ENCODE measurements at regions of chr10 and their contacts with region 1.

Region 1: DNA sequence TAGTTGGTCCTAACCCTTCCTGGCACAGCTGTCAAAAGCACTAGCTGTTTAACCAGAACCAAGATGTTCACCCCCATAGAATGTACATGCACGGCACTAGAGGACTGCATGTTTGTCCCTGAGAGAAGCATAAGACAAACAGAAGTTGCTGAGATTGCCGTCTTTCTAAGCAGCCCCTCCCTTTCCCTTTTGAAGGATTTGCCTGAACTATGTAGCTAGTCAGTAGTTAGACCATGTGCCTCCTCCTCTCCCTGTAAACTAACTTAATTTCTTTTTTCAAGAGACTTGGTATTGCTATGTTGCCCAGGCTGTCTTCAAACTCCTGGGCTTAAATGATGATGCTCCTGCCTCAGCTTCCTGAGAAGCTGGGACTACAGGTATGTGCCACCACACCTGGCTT is 40.7 kb downstream of the TBC1D12 start:
- DNase-seq: no peak
- H3K4me3 ChIP-seq: no peak overlapping the region
- H3K27ac ChIP-seq: no peak overlapping the region
- H3K4me1 ChIP-seq: peaks cover 0 to 23% (median 15%) of the 10 kb centered on the region in 4 donors
- H3K27me3 ChIP-seq: no peaks in the 10 kb centered on the region
- CTCF ChIP-seq: no peak
- EP300 ChIP-seq: no peak
- POLR2A ChIP-seq: no peak

Region 2: GRCh38 chr10:93702211-93703001 is 740.6 kb before region 1 on chr10 and contains the start of gene FRA10AC1:
- intact Hi-C with region 1: loop called (anchors 10 kb)
- DNase-seq: peak; percentile 99
- H3K4me3 ChIP-seq: peak within 1 kb of the TSS; percentile 63 to 84 (median 78)
- H3K27ac ChIP-seq: peak within 1 kb of the TSS; percentile 87 to 92 (median 88)
- H3K4me1 ChIP-seq: peaks cover 9 to 29% (median 23%) of the 10 kb centered on the region in 4 donors
- H3K27me3 ChIP-seq: no peaks in the 10 kb centered on the region
- CTCF ChIP-seq: peak; percentile 48 to 71 (median 62)
- EP300 ChIP-seq: no peak
- POLR2A ChIP-seq: peak; percentile 59
- total RNA-seq, gene FRA10AC1: 7.0 to 22.4 (median 12.1) TPM

Region 3: GRCh38 chr10:93916257-93917063 is 526.6 kb before region 1 on chr10:
- intact Hi-C with region 1: loop called (anchors 5 kb)
- DNase-seq: no peak
- H3K4me3 ChIP-seq: peak overlapping the region; percentile 17 to 36 (median 26)
- H3K27ac ChIP-seq: no peak overlapping the region
- H3K4me1 ChIP-seq: peaks cover 0 to 20% (median 17%) of the 10 kb centered on the region in 4 donors
- H3K27me3 ChIP-seq: no peaks in the 10 kb centered on the region
- CTCF ChIP-seq: peak; percentile 65 to 68 (median 68)
- EP300 ChIP-seq: no peak
- POLR2A ChIP-seq: no peak

Region 4: DNA sequence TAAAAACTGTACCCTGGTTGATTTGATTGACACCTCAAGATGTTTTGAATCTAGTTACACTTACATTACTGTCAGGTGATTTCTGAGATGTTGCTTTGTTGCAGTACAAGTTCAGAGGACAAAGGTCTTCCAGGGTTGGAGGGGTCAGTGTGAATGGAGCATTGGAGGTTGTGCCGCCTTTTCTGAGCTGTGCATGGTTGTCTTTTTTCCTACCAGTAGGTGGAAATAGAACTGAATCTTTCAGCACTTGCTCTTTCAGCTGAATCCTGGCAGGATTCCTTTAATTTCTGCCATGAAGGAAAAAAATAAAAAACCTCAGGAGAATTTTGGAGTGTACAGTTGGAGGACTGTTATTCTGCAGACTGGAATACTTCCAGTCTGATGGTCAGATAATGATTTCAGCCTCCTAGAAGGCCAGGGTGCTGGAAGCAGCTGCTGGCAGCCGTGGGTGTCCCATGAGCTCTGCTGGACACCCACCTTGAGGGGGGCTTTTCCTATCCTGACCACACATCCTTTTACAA is 366.7 kb before region 1 on chr10:
- intact Hi-C with region 1: loop called (anchors 10 kb)
- DNase-seq: no peak
- H3K4me3 ChIP-seq: peak overlapping the region in 1 of 4 donors; percentile 15
- H3K27ac ChIP-seq: peak overlapping the region; percentile 43 to 67 (median 54)
- H3K4me1 ChIP-seq: peaks cover 23 to 39% (median 27%) of the 10 kb centered on the region in 4 donors
- H3K27me3 ChIP-seq: no peaks in the 10 kb centered on the region
- CTCF ChIP-seq: peak; percentile 60 to 71 (median 67)
- EP300 ChIP-seq: no peak
- POLR2A ChIP-seq: no peak

Region 5: GRCh38 chr10:94362360-94363250 is 80.4 kb before region 1 on chr10 and contains the start of gene NOC3L:
- intact Hi-C with region 1: loop called (anchors 5 kb)
- DNase-seq: peak; percentile 98
- H3K4me3 ChIP-seq: peak within 1 kb of the TSS; percentile 69 to 88 (median 78)
- H3K27ac ChIP-seq: peak within 1 kb of the TSS; percentile 69 to 86 (median 82)
- H3K4me1 ChIP-seq: peaks cover 18 to 34% (median 28%) of the 10 kb centered on the region in 4 donors
- H3K27me3 ChIP-seq: no peaks in the 10 kb centered on the region
- CTCF ChIP-seq: peak; percentile 83 to 91 (median 90)
- EP300 ChIP-seq: no peak
- POLR2A ChIP-seq: no peak
- total RNA-seq, gene NOC3L: 18.1 to 23.3 (median 20.7) TPM

Region 6: DNA sequence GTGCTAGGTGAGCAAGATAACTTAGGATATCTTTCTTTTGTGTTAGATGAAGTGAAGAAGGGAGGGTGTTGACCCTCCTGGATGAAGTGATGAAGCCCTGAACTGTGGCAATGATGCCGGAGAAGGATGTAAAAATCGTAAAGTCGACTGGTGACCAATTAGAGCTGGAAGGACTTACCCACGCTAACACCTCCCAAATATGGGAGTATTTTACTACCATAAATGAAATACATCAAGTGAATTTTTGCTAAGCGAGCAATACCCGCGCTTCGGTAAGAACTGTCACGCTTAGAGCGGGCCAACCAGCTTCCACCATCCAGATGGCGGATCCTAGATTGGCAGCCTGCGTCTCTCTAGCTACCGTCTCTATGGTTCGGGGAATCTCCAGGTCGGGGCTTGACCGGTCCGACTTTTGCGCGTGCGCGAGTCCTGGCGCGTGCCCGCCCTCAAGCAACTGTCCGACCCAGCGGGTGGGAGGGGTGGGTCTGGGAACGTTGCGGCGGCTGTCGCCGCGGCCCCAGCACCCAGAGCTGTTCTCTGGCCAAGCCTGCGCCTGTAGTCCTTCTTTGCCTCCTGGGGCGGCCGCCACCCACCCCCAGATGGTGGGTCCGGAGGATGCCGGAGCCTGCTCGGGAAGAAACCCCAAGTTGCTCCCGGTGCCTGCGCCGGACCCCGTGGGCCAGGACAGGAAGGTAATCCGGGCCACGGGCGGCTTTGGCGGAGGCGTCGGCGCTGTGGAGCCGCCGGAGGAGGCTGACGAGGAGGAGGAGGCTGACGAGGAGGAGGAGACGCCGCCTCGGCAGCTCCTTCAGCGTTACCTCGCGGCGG is 40.8 kb before region 1 on chr10 and contains the start of gene TBC1D12:
- intact Hi-C with region 1: loop called (anchors 5 kb)
- DNase-seq: peak; percentile 98
- H3K4me3 ChIP-seq: peak within 1 kb of the TSS; percentile 82 to 97 (median 93)
- H3K27ac ChIP-seq: peak within 1 kb of the TSS; percentile 93 to 97 (median 96)
- H3K4me1 ChIP-seq: peaks cover 16 to 32% (median 23%) of the 10 kb centered on the region in 4 donors
- H3K27me3 ChIP-seq: no peaks in the 10 kb centered on the region
- CTCF ChIP-seq: peak in 1 of 3 experiments; percentile 4
- EP300 ChIP-seq: no peak
- POLR2A ChIP-seq: peak; percentile 47
- total RNA-seq, gene TBC1D12: 16.2 to 22.9 (median 17.7) TPM

Region 7: DNA sequence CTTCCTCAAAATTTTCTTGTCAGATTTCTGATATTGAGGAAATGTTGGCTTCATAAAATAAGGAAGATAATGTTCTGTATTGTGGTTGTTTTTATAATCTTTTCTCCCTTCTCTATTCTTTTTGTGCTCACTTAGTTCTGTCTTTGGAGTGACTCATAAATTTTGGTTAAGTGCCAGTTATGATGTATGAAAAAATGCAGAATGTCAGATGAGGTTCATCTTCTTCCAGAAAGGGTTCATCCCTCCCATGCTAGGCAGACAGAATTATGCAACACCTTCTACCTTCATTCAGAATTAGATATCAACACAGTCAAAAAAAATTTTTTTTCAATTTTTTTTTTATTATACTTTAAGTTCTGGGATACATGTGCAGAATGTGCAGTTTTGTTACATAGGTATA is 282.8 kb after region 1 on chr10:
- intact Hi-C with region 1: no loop called
- DNase-seq: no peak
- H3K4me3 ChIP-seq: no peak overlapping the region
- H3K27ac ChIP-seq: no peak overlapping the region
- H3K4me1 ChIP-seq: no peaks in the 10 kb centered on the region
- H3K27me3 ChIP-seq: no peaks in the 10 kb centered on the region
- CTCF ChIP-seq: no peak
- EP300 ChIP-seq: no peak
- POLR2A ChIP-seq: no peak